ENCODE measurements at regions of chr12 and their contacts with region 1.

Region 1: GRCh38 chr12:12999959-13000615 is at the start of gene HEBP1:
- DNase-seq: peak; percentile 91
- H3K4me3 Mint-ChIP-seq: peak within 1 kb of the TSS; percentile 87
- H3K27ac Mint-ChIP-seq: peak within 1 kb of the TSS; percentile 86
- H3K4me1 Mint-ChIP-seq: peaks cover 37% of the 10 kb centered on the region
- H3K27me3 Mint-ChIP-seq: peaks cover 34% of the 10 kb centered on the region
- total RNA-seq, gene HEBP1: 9.5 and 11.3 TPM in 2 replicates

Region 2: DNA sequence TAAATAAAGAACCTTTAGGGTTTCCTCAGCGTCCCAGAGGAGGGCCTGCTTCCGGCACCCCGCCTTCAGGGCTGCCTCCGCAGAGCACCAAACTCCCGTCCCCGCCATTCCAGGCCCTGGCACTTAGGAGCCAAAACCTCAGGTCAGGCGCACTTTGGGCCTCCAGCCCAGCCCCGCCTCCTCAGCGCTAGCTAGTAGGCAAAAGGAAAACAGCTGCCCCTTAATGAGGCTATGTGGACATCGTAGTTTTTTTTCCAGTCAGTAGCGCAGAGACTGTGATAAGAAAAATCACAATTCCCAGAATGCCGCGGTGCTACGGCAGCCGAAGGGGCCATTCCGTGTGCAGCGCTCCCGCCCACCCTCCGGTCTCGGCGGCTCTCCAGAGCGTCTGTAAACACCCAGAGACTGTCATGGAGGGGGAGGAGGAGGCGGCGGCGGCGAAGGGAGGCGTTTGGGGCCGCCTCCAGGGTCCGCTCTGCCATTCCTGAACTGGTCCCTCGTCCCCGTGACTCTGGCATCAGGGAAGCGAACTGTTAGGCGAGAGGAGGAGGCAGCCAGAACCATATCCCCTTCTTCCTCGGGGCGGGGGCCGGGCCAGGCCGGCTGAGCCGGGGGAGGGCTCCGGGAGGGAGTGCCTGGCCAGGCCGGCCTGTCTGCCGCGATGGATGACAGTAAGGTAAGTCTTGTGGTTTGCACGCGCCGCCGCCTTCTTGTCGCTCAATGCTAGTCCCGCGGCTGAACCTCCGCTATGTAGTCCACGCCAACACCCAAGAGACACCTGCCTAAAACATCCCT is 388.4 kb before region 1 on chr12 and contains the start of gene CREBL2:
- intact Hi-C with region 1: loop called (anchors 5 kb)
- DNase-seq: peak; percentile 78
- H3K4me3 Mint-ChIP-seq: peak within 1 kb of the TSS; percentile 95
- H3K27ac Mint-ChIP-seq: peak within 1 kb of the TSS; percentile 96
- H3K4me1 Mint-ChIP-seq: peaks cover 47% of the 10 kb centered on the region
- H3K27me3 Mint-ChIP-seq: no peaks in the 10 kb centered on the region
- total RNA-seq, gene CREBL2: 16.7 and 17.9 TPM in 2 replicates

Region 3: GRCh38 chr12:12813120-12814101 is 186.7 kb before region 1 on chr12 and contains the start of gene DDX47:
- intact Hi-C with region 1: loop called (anchors 2 kb)
- DNase-seq: peak; percentile 94
- H3K4me3 Mint-ChIP-seq: peak within 1 kb of the TSS; percentile 85
- H3K27ac Mint-ChIP-seq: peak within 1 kb of the TSS; percentile 81
- H3K4me1 Mint-ChIP-seq: peaks cover 52% of the 10 kb centered on the region
- H3K27me3 Mint-ChIP-seq: no peaks in the 10 kb centered on the region
- total RNA-seq, gene DDX47: 120 and 127 TPM in 2 replicates

Region 4: DNA sequence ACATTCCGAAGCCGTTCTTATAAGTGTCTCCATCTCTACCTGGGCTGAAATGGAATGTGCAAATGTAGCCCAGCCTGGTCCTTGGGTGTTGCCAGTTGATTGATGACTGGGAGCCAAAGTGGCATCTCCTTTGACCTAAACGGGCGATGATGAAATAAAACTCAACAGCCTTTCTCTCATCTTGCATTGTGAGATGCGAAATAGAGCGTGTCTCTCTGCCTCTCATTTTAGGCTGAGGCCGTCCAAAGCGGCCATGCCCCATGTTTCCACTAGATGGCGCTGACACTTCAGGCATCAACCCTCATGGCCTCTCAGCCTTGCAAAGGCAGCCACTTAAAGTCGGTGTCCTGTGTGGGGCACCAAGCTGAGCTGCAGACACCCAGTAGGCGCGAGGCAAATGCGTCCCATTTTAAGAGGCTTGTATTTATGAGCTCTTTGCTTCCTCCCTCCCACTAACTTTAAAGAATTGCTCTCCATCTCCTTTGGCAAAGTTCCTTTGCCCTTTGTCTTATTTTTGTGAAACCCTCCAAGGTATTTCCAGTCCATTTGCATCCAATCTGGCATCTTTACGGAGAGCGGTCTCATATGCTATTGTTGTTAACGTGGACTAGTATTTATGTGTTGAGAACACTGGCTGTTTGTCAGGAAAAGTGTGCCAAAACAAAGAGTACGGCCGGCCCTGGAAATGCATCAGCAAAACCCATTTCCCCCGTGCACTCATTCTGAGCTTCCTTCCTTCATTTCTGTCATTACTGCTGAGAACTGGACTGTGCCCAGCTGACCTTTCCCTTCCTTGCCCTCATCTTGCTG is 83.7 kb before region 1 on chr12:
- intact Hi-C with region 1: loop called (anchors 1 kb)
- DNase-seq: peak; percentile 76
- H3K4me3 Mint-ChIP-seq: no peak overlapping the region
- H3K27ac Mint-ChIP-seq: no peak overlapping the region
- H3K4me1 Mint-ChIP-seq: peaks cover 11% of the 10 kb centered on the region
- H3K27me3 Mint-ChIP-seq: peaks cover 14% of the 10 kb centered on the region

Region 5: DNA sequence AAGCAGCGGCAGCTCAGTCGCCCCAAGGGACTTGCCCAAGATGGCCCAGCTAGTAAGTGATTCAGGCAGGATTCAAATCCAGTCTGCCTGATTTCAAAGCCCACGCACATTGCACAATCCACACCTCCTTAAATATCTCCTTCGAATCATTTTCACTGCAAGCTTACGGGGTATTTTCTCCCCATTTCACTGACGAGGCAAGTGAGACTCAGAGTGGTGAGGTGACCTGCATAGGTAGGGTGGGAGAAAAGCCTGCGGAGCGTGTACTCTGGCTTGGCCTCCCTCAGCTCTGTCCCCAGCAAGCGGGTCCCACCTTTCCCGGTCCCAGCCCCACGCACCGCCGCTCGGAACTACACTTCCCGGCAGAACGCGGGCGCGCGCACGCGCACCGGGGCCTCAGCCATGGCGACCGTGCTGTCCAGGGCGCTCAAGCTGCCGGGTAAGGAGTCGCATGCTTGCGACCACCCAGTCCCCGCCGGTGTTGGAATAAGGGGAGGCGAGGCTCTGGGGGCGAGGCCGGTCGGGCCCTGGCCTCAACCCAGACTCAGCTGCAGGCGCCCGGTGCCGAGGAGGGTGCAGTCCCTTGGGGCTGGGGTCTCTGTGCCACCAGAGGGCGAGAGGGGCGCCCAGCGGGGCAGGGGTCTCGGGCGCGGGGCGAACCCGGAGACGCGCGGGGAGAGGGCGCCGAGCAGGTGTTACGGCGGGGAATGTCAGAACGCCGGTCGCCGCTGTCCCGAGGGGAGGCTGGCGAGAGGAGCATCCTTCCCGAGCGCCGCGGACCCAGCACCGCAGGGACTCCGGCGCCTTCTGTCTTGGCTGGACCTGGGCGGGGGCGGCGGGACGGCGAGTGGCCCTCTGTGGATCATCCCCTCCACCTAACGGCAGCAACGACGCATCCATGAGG is 44.2 kb after region 1 on chr12 and contains the start of gene FAM234B:
- intact Hi-C with region 1: loop called (anchors 1 kb)
- DNase-seq: peak; percentile 62
- H3K4me3 Mint-ChIP-seq: peak within 1 kb of the TSS; percentile 83
- H3K27ac Mint-ChIP-seq: peak within 1 kb of the TSS; percentile 66
- H3K4me1 Mint-ChIP-seq: peaks cover 4% of the 10 kb centered on the region
- H3K27me3 Mint-ChIP-seq: peaks cover 19% of the 10 kb centered on the region
- total RNA-seq, gene FAM234B: 6.0 and 6.6 TPM in 2 replicates

Region 6: DNA sequence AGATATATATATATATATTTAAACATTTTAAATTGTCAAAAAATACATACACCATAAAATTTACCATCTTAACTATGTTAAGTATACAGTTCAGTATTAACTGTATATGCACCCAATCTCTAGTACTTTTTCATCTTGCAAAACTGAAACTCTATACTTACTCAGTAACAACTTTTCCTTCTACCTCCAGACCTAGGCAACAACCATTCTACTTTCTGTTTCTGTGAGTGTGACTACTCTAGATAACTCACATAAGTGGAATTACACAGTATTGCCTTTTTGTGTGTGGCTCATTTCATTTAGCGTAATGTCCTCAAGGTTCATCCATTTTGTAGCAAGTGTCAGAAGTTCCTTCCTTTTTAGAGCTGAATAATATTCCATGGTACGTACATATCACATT is 52.3 kb after region 1 on chr12:
- intact Hi-C with region 1: loop called (anchors 2 kb)
- DNase-seq: no peak
- H3K4me3 Mint-ChIP-seq: no peak overlapping the region
- H3K27ac Mint-ChIP-seq: no peak overlapping the region
- H3K4me1 Mint-ChIP-seq: peaks cover 5% of the 10 kb centered on the region
- H3K27me3 Mint-ChIP-seq: no peaks in the 10 kb centered on the region

Region 7: GRCh38 chr12:13135371-13136178 is 135.5 kb after region 1 on chr12:
- intact Hi-C with region 1: no loop called
- DNase-seq: no peak
- H3K4me3 Mint-ChIP-seq: no peak overlapping the region
- H3K27ac Mint-ChIP-seq: no peak overlapping the region
- H3K4me1 Mint-ChIP-seq: no peaks in the 10 kb centered on the region
- H3K27me3 Mint-ChIP-seq: peaks cover 15% of the 10 kb centered on the region

Region 8: GRCh38 chr12:13211859-13212664 is 212.0 kb after region 1 on chr12:
- intact Hi-C with region 1: loop called (anchors 1 kb)
- DNase-seq: peak; percentile 62
- H3K4me3 Mint-ChIP-seq: no peak overlapping the region
- H3K27ac Mint-ChIP-seq: peak overlapping the region; percentile 41
- H3K4me1 Mint-ChIP-seq: peaks cover 53% of the 10 kb centered on the region
- H3K27me3 Mint-ChIP-seq: no peaks in the 10 kb centered on the region

Region 9: DNA sequence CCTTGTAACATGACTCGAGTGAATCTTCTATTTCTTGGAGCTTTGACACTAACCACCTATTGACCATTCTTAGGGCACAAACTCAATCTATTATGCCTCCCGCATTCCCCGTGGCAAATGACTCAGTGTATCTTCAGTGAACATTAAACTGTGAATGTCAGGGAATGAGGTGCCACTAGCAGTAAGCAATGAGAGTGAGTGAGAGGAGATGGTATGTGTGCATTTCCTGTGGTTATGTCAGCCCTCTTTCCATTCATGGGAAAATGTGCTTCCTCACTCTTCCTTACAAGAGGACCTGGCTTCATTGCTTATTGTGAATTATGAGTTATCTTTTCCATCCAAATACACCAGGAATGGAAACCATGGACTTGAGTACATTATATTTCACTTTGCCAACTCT is 425.7 kb after region 1 on chr12:
- intact Hi-C with region 1: no loop called
- DNase-seq: no peak
- H3K4me3 Mint-ChIP-seq: no peak overlapping the region
- H3K27ac Mint-ChIP-seq: no peak overlapping the region
- H3K4me1 Mint-ChIP-seq: no peaks in the 10 kb centered on the region
- H3K27me3 Mint-ChIP-seq: peaks cover 2% of the 10 kb centered on the region

Measured in activated T-helper 1 cell treated with anti-CD3 and anti-CD28 coated beads, Interleukin-12 subunit alpha, Interleukin-12 subunit beta, Interleukin-2, Interleukin-4 antibody, amounts not matched to agents 30 ng/mL and 10 ng/mL and 1 ng/mL, durations not matched to agents 14 hours and 24 hours and 36 hours (primary cell).